ENCODE measurements at regions of chr10 and their contacts with region 1.

Region 1: GRCh38 chr10:77165445-77166208 is 472.0 kb downstream of the KCNMA1 start:
- DNase-seq: peak; percentile 68
- H3K4me3 ChIP-seq: peak overlapping the region in 2 of 3 experiments; percentile 3 to 16
- H3K27ac ChIP-seq: peak overlapping the region; percentile 96
- H3K4me1 ChIP-seq: peaks cover 43% of the 10 kb centered on the region
- H3K27me3 ChIP-seq: no peaks in the 10 kb centered on the region
- CTCF ChIP-seq: peak; percentile 76 to 79

Region 2: DNA sequence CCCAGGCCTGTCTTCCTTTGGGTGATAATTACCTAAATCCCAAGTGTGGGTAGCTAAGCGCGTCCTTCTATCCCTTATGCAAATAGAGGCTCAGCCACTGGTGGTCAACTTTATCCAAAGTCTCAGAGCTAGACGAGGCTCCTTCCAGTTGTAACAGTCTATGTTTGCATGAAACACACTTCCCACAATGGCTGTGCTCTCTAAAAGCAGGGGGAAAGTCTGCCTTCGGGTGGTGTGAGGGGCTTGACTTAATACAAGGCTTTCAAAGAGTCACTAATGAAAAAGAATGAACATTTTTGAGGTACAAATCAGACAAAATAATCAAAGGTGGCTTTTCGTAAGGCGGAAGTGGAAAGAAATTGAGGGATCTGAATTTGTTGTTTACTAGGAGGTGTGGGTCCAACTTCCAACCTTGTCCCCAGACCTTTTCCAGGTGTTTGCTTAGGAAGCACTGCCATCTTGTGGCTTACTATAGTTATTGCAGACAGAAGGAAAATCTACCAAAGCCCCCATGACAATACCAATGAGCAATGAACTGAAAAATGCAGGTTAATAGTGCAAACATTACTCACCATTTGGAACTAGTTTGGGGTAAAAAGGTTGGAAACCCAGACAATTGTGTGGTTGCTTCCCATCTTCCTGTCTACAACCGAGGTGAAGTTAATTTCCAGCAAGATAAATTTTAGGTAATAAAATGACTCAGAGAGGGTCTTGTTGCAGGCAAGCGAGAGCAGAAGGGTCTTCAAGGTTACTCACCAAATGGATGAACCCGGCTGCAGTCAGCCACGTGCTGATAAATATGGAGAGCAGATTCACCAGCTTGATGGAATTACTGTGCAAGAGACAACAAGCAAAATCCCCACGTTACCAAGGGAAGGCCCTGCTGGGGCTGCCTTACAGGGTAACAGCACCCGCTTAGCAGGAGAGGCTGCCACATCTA is 53.7 kb before region 1 on chr10:
- CTCF ChIA-PET with region 1: no interaction called
- dilution Hi-C with region 1: no loop called
- in situ Hi-C with region 1: no loop called
- intact Hi-C with region 1: loop called (anchors 1 kb)
- DNase-seq: peak; percentile 66
- H3K4me3 ChIP-seq: no peak overlapping the region
- H3K27ac ChIP-seq: no peak overlapping the region
- H3K4me1 ChIP-seq: peaks cover 9% of the 10 kb centered on the region
- H3K27me3 ChIP-seq: no peaks in the 10 kb centered on the region
- CTCF ChIP-seq: peak; percentile 76 to 77

Region 3: DNA sequence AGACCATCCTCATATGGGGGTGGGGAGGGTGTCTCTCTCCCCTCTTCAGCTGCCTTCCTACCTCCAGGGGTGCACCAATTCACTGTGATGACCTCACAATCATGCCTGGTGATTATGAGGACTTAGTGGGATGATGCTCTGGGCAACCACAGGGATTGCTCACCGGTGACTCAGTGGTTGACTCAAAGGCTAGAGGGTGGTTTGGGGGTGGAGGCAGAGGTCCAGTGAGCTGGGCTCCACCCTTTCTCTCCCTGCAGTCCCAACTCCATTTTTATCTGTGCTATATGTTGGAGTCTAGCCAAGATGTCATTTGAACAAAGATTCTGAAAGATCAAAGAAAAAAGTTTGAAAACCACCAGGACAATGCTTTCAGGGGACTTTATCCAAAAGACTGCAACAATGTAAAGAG is 185.1 kb after region 1 on chr10:
- CTCF ChIA-PET with region 1: no interaction called
- dilution Hi-C with region 1: no loop called
- in situ Hi-C with region 1: no loop called
- intact Hi-C with region 1: loop called (anchors 10 kb)
- DNase-seq: peak; percentile 98
- H3K4me3 ChIP-seq: no peak overlapping the region
- H3K27ac ChIP-seq: peak overlapping the region; percentile 69
- H3K4me1 ChIP-seq: peaks cover 40% of the 10 kb centered on the region
- H3K27me3 ChIP-seq: no peaks in the 10 kb centered on the region
- CTCF ChIP-seq: peak in 1 of 2 donors; percentile 27

Region 4: DNA sequence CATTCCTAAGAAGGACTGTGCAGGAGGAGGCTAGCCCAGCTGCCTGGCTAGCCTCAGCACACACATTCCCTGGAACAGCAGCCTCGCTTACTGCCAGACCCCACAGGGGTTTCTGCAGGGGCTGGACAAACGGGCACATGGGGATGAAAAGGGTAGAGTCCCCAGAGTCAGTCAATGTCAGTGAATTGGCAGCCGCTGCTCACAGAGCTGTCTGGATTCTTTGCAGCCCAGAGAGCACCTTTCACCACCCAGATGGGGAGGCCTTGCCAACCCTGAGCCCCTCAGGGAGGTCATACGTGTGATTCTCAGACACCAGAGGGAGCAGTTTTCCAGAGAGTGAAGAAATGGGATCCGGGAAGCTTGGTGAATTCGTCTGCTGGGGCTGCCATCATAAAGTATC is 328.7 kb after region 1 on chr10:
- CTCF ChIA-PET with region 1: no interaction called
- dilution Hi-C with region 1: no loop called
- in situ Hi-C with region 1: loop called in 1 of 2 experiments (anchors 10 kb)
- intact Hi-C with region 1: no loop called
- DNase-seq: no peak
- H3K4me3 ChIP-seq: no peak overlapping the region
- H3K27ac ChIP-seq: no peak overlapping the region
- H3K4me1 ChIP-seq: peaks cover 33% of the 10 kb centered on the region
- H3K27me3 ChIP-seq: no peaks in the 10 kb centered on the region
- CTCF ChIP-seq: peak; percentile 27 to 40

Region 5: GRCh38 chr10:77524281-77524711 is 358.7 kb after region 1 on chr10:
- CTCF ChIA-PET with region 1: no interaction called
- dilution Hi-C with region 1: loop called (anchors 25 kb)
- in situ Hi-C with region 1: no loop called
- intact Hi-C with region 1: loop called (anchors 5 kb)
- DNase-seq: peak; percentile 24
- H3K4me3 ChIP-seq: no peak overlapping the region
- H3K27ac ChIP-seq: peak overlapping the region; percentile 26
- H3K4me1 ChIP-seq: peaks cover 24% of the 10 kb centered on the region
- H3K27me3 ChIP-seq: no peaks in the 10 kb centered on the region
- CTCF ChIP-seq: no peak

Region 6: GRCh38 chr10:77710759-77711682 is 545.4 kb after region 1 on chr10:
- CTCF ChIA-PET with region 1: interaction called, 3 read pairs
- dilution Hi-C with region 1: no loop called
- in situ Hi-C with region 1: no loop called
- intact Hi-C with region 1: loop called (anchors 1 kb)
- DNase-seq: peak; percentile 43
- H3K4me3 ChIP-seq: peak overlapping the region in 2 of 3 experiments; percentile 4 to 42
- H3K27ac ChIP-seq: no peak overlapping the region
- H3K4me1 ChIP-seq: peaks cover 8% of the 10 kb centered on the region
- H3K27me3 ChIP-seq: no peaks in the 10 kb centered on the region
- CTCF ChIP-seq: peak; percentile 92 to 99

Region 7: GRCh38 chr10:77774940-77775391 is 609.3 kb after region 1 on chr10:
- CTCF ChIA-PET with region 1: no interaction called
- dilution Hi-C with region 1: no loop called
- in situ Hi-C with region 1: no loop called
- intact Hi-C with region 1: no loop called
- DNase-seq: no peak
- H3K4me3 ChIP-seq: no peak overlapping the region
- H3K27ac ChIP-seq: no peak overlapping the region
- H3K4me1 ChIP-seq: peaks cover 6% of the 10 kb centered on the region
- H3K27me3 ChIP-seq: no peaks in the 10 kb centered on the region
- CTCF ChIP-seq: no peak

Region 8: DNA sequence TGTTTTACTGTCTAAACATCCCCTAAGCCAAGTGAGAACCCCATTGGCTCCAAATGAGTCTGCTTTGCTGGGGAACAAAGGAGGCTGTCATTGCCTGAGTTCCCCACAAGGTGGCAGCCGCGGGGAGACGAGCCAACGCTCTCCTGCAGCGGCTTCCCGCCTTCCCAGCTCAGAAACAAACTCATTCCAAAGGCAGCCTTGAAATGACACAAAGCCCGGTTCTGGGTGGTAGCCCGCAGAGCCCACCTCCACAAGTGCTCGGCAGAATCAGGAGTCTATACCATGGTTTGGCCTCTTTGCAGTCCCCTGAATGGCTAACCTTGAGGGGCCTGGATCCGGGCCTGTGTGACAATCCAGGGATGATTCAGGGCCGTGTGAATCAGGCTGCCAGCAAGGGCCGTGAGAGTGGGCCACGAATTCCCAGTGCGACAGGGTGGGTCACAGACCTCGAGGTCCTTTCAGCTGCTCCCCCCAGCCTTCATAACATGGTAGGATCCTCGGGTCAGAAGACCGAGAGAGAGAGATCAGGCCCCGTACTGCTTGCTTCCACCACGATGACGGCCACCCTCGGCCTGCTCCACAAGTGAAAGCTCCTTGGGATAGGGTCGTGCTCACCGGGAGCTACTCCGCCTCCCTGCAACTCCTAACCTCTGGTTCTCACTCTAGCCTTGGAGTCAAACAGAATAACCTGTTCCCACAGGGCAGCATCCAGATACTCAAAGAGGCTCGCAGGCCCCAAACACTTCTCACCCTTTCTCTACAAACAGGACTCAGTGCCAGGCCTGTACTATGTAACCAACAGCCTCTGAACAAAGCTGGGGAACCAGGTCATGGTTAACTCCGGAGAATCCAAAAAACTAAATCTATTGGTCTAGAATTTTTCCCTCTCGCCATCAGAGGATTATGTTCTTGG is 681.3 kb after region 1 on chr10:
- CTCF ChIA-PET with region 1: no interaction called
- dilution Hi-C with region 1: no loop called
- in situ Hi-C with region 1: no loop called
- intact Hi-C with region 1: loop called (anchors 10 kb)
- DNase-seq: peak; percentile 46
- H3K4me3 ChIP-seq: no peak overlapping the region
- H3K27ac ChIP-seq: peak overlapping the region; percentile 23
- H3K4me1 ChIP-seq: peaks cover 28% of the 10 kb centered on the region
- H3K27me3 ChIP-seq: no peaks in the 10 kb centered on the region
- CTCF ChIP-seq: peak; percentile 94 to 98

Measured in mammary epithelial cell (primary cell).